HEK293T (cell line): ENCODE measurements at regions of chr3 and their contacts with region 1.

Region 1: GRCh38 chr3:56988458-56989168 is 71.9 kb upstream of the SPATA12 start:
- DNase-seq: peak; percentile 72

Region 2: GRCh38 chr3:56702490-56703315 is 285.9 kb before region 1 on chr3:
- CTCF ChIA-PET with region 1: interaction called, 27 read pairs
- POLR2A ChIA-PET with region 1: no interaction called
- DNase-seq: peak; percentile 49

Region 3: DNA sequence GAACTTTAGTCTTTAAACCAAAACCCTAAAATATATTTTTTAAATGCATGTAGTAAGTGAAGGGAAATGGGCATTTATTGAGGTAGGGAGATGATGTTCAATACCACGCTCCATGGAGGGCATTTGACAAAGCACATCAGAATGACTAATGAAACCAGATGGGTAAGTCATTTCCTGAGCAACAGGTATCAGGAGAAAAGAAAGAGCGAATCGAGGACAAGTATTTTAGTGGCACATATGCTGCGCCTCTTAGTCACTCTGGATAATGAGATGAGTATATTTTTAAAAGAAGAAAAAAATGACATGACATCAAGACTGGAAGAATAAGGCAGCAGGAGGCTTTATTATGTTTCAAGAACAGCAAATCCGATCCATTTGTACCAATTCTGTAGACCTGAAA is 57.9 kb before region 1 on chr3:
- CTCF ChIA-PET with region 1: no interaction called
- POLR2A ChIA-PET with region 1: no interaction called
- DNase-seq: no peak

Region 4: GRCh38 chr3:56966104-56966503 is 22.5 kb before region 1 on chr3:
- CTCF ChIA-PET with region 1: no interaction called
- POLR2A ChIA-PET with region 1: no interaction called
- DNase-seq: no peak

Region 5: DNA sequence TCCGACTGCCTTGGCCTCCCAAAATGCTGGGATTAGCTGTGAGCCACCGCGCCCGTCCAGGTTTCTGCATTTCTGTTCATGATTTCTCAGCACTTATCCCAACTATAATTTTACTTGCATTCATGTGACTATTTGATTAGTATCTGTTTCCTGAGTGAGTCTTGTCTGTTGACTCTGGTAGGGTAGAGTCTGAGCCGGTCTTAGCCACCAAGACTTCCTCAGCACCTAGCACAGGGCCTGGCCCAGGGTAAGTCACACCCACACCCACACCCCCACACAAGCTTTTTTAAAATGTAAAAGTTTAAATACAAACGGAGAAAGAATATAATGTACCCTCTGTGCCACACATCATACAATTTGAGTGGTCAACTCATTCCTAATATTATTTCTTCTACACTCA is 68.7 kb after region 1 on chr3:
- CTCF ChIA-PET with region 1: no interaction called
- POLR2A ChIA-PET with region 1: no interaction called
- DNase-seq: no peak